ENCODE measurements at regions of chr15 and their contacts with region 1.

Region 1: GRCh38 chr15:56552668-56553067 is 87.7 kb upstream of the MNS1 start:
- DNase-seq: no peak
- ATAC-seq: no peak
- H3K4me3 ChIP-seq: no peak overlapping the region
- H3K27ac ChIP-seq: no peak overlapping the region
- H3K4me1 ChIP-seq: no peaks in the 10 kb centered on the region
- H3K27me3 ChIP-seq: no peaks in the 10 kb centered on the region
- CTCF ChIP-seq: no peak
- POLR2A ChIP-seq: no peak
- RAD21 ChIP-seq: no peak

Region 2: DNA sequence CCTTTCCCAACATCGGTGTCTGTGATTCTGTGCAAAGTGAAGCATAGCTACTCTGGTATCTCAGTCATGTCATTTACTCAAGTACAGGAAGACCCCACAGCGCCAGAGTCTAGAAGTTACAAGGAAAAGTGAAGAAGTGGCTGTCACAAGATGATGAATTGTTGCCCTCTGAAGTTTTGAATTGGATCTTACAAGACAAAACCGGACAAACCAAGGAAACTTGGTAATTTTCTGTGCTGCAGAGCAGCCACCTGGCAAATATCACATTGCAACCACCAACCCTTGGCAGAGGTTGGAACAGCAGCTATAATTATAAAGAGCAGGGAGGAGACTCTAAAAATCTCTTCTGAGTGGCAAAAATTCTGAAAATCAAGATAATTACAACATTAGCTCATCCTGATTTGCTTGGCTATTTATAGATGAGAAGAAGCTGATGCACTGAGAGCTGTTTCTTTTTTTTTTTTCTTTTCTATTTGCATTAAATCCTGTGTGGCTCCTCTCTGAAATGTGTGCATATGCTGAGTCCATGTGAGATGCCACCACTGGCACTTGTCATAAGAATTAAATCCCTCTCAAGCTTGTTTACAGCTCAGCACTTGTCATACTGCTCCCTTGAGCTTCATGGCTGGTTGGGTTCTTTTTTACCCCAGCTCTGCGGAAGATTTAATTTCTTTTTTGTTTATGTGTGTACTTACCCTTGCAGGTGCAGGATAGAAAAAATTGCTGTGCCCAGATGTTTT is 19.8 kb before region 1 on chr15:
- CTCF ChIA-PET with region 1: interaction called, 3 read pairs
- POLR2A ChIA-PET with region 1: interaction called, 11 read pairs
- dilution Hi-C with region 1: no loop called
- in situ Hi-C with region 1: no loop called
- intact Hi-C with region 1: no loop called
- DNase-seq: no peak
- ATAC-seq: no peak
- H3K4me3 ChIP-seq: no peak overlapping the region
- H3K27ac ChIP-seq: no peak overlapping the region
- H3K4me1 ChIP-seq: no peaks in the 10 kb centered on the region
- H3K27me3 ChIP-seq: peaks cover 31% of the 10 kb centered on the region
- CTCF ChIP-seq: no peak
- POLR2A ChIP-seq: no peak
- RAD21 ChIP-seq: no peak

Measured in IMR-90 (cell line).